ENCODE measurements at regions of chr12 and their contacts with region 1.

Region 1: GRCh38 chr12:108633534-108634248 is at the start of gene SELPLG:
- DNase-seq: peak; percentile 76 to 97 (median 84)
- ATAC-seq: peak; percentile 69
- H3K4me3 ChIP-seq: peak within 1 kb of the TSS; percentile 87
- H3K4me3 Mint-ChIP-seq: peak within 1 kb of the TSS; percentile 98
- H3K27ac ChIP-seq: peak within 1 kb of the TSS; percentile 86 to 95
- H3K27ac Mint-ChIP-seq: peak within 1 kb of the TSS; percentile 100
- H3K4me1 ChIP-seq: peaks cover 69% of the 10 kb centered on the region
- H3K4me1 Mint-ChIP-seq: peaks cover 73% of the 10 kb centered on the region
- H3K27me3 ChIP-seq: no peaks in the 10 kb centered on the region
- H3K27me3 Mint-ChIP-seq: no peaks in the 10 kb centered on the region
- CTCF ChIP-seq: no peak
- total RNA-seq, gene SELPLG: 25.7 to 27.8 TPM

Region 2: DNA sequence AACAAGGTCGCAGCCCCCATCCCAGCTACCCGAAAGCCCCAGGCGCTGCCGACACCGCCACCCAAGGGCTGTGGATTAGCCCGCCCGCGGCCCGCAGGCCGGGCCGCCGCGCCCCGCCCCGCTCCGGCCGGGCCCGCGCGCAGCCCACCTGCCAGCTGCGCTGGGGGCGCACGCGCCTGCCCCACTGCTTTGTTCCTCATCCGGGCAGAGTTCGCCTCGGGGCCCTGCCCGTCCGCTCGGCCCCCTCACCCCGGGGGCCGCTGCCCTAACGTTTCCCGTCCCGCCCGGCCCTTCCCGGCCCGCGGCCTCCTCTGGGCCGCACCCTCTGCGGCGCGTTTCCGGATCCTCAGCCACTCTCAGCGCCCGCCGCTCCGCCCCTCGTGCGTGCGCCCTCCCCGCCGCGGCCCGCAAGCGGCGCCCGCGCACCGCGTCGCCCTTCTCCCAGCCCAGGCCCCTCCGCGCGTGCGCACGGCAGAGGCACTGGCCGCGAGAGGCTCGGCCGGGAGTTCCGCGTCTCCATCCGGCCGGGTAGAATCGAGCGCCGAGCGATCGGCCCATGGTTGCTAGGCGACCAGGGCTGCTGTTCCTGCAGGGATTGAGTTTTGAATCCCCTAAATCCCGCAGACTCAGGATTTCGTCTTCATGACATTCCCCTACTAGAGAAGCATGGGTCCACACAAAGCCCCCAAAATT is 872.7 kb before region 1 on chr12 and contains the start of gene PRDM4:
- CTCF ChIA-PET with region 1: no interaction called
- POLR2A ChIA-PET with region 1: no interaction called
- intact Hi-C with region 1: loop called in 1 of 2 experiments (anchors 10 kb)
- DNase-seq: peak; percentile 75 to 98 (median 88)
- ATAC-seq: peak; percentile 91
- H3K4me3 ChIP-seq: peak within 1 kb of the TSS; percentile 78
- H3K4me3 Mint-ChIP-seq: peak within 1 kb of the TSS; percentile 96
- H3K27ac ChIP-seq: peak within 1 kb of the TSS; percentile 51 to 77
- H3K27ac Mint-ChIP-seq: peak within 1 kb of the TSS; percentile 87
- H3K4me1 ChIP-seq: peaks cover 26% of the 10 kb centered on the region
- H3K4me1 Mint-ChIP-seq: peaks cover 48% of the 10 kb centered on the region
- H3K27me3 ChIP-seq: no peaks in the 10 kb centered on the region
- H3K27me3 Mint-ChIP-seq: no peaks in the 10 kb centered on the region
- CTCF ChIP-seq: no peak
- total RNA-seq, gene PRDM4: 40.2 to 44.0 TPM

Region 3: DNA sequence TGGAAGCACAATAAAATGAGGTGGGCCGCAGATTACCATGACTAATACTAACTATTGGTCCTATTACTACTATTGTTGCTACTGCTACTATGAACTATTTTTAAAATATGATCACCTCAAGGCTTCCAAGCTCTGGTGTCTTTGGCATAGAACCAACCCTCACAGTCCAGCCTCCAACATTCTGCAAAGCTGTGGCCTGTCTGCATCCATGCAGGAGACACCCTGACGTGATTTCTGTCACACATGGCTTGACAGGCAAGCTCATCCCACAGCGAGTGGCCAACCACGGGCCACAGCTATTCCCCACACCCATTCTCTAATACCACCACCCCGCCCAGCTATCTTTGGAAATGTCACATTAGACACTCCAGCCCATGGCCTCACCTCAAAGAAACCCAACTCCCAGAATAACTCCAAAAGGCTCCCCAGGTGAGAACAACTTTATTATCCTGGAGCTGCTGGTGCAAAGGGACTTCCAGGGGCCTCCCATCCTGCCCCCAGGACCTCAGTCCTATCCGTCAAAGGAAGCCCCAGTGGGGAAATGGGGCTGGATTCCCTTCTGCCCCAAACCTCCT is 56.9 kb before region 1 on chr12:
- CTCF ChIA-PET with region 1: no interaction called
- POLR2A ChIA-PET with region 1: interaction called, 11 read pairs
- intact Hi-C with region 1: no loop called
- DNase-seq: no peak
- ATAC-seq: no peak
- H3K4me3 ChIP-seq: no peak overlapping the region
- H3K4me3 Mint-ChIP-seq: no peak overlapping the region
- H3K27ac ChIP-seq: no peak overlapping the region
- H3K27ac Mint-ChIP-seq: peak overlapping the region; percentile 76
- H3K4me1 ChIP-seq: peaks cover 15% of the 10 kb centered on the region
- H3K4me1 Mint-ChIP-seq: peaks cover 45% of the 10 kb centered on the region
- H3K27me3 ChIP-seq: no peaks in the 10 kb centered on the region
- H3K27me3 Mint-ChIP-seq: no peaks in the 10 kb centered on the region
- CTCF ChIP-seq: no peak

Region 4: GRCh38 chr12:108597559-108598471 is 35.9 kb before region 1 on chr12 and contains the start of gene TMEM119:
- CTCF ChIA-PET with region 1: no interaction called
- POLR2A ChIA-PET with region 1: no interaction called
- intact Hi-C with region 1: no loop called
- DNase-seq: no peak
- ATAC-seq: no peak
- H3K4me3 ChIP-seq: no peak within 1 kb of the TSS
- H3K4me3 Mint-ChIP-seq: no peak within 1 kb of the TSS
- H3K27ac ChIP-seq: no peak within 1 kb of the TSS
- H3K27ac Mint-ChIP-seq: no peak within 1 kb of the TSS
- H3K4me1 ChIP-seq: no peaks in the 10 kb centered on the region
- H3K4me1 Mint-ChIP-seq: no peaks in the 10 kb centered on the region
- H3K27me3 ChIP-seq: no peaks in the 10 kb centered on the region
- H3K27me3 Mint-ChIP-seq: no peaks in the 10 kb centered on the region
- CTCF ChIP-seq: no peak
- total RNA-seq, gene TMEM119: 2.1 to 2.6 TPM

Region 5: DNA sequence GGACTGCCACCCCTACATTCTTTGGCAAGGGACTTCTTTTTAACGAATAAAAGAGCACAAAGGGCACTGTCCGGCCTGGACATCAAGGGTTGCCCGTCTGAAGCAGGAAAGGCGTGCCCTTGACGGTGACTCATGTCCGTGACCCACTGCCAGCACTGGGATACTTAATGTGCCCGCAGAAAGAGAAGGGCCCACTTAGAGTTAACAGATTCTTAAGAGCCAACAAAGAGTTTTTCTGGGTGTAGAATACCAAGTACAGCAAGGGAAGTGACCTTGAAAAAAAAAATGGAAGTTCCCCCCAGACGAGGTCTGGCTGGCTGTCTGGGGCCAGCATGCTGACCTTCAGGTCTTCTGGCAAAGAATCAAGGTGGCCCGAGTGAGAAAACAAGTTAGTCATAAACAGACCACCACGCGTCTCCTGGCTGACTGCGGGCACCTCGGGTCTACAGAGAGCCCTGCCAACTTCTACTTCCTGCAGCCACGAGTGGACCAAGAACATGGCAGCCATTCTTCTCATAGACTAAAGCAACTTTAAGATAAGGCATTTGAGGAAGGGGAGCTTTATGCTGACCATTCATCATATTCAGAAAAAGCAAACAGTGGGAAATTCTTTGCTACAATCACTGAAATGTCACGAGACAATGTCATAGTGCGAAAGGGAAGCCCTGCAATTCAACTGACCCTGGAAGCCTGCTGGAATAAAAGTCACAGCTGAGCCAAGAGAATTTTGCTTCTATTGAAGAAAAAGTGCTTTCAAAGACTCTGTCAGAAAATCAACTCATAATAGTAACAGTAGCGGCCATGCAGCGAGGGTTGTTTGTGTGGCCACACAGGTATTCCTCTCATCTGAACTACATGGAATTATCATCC is 10.5 kb after region 1 on chr12:
- CTCF ChIA-PET with region 1: interaction called, 6 read pairs
- POLR2A ChIA-PET with region 1: interaction called, 70 read pairs
- intact Hi-C with region 1: no loop called
- DNase-seq: no peak
- ATAC-seq: no peak
- H3K4me3 ChIP-seq: no peak overlapping the region
- H3K4me3 Mint-ChIP-seq: no peak overlapping the region
- H3K27ac ChIP-seq: no peak overlapping the region
- H3K27ac Mint-ChIP-seq: no peak overlapping the region
- H3K4me1 ChIP-seq: peaks cover 36% of the 10 kb centered on the region
- H3K4me1 Mint-ChIP-seq: peaks cover 31% of the 10 kb centered on the region
- H3K27me3 ChIP-seq: no peaks in the 10 kb centered on the region
- H3K27me3 Mint-ChIP-seq: no peaks in the 10 kb centered on the region
- CTCF ChIP-seq: no peak

Region 6: GRCh38 chr12:108691175-108691997 is 57.7 kb after region 1 on chr12:
- CTCF ChIA-PET with region 1: interaction called, 4 read pairs
- POLR2A ChIA-PET with region 1: interaction called, 4 read pairs
- intact Hi-C with region 1: loop called in 1 of 2 experiments (anchors 5 kb)
- DNase-seq: peak; percentile 17 to 87 (median 58)
- ATAC-seq: peak; percentile 74
- H3K4me3 ChIP-seq: peak overlapping the region; percentile 32
- H3K4me3 Mint-ChIP-seq: peak overlapping the region; percentile 70
- H3K27ac ChIP-seq: peak overlapping the region in 1 of 2 donors; percentile 50
- H3K27ac Mint-ChIP-seq: peak overlapping the region; percentile 77
- H3K4me1 ChIP-seq: peaks cover 41% of the 10 kb centered on the region
- H3K4me1 Mint-ChIP-seq: peaks cover 58% of the 10 kb centered on the region
- H3K27me3 ChIP-seq: no peaks in the 10 kb centered on the region
- H3K27me3 Mint-ChIP-seq: no peaks in the 10 kb centered on the region
- CTCF ChIP-seq: no peak

Region 7: DNA sequence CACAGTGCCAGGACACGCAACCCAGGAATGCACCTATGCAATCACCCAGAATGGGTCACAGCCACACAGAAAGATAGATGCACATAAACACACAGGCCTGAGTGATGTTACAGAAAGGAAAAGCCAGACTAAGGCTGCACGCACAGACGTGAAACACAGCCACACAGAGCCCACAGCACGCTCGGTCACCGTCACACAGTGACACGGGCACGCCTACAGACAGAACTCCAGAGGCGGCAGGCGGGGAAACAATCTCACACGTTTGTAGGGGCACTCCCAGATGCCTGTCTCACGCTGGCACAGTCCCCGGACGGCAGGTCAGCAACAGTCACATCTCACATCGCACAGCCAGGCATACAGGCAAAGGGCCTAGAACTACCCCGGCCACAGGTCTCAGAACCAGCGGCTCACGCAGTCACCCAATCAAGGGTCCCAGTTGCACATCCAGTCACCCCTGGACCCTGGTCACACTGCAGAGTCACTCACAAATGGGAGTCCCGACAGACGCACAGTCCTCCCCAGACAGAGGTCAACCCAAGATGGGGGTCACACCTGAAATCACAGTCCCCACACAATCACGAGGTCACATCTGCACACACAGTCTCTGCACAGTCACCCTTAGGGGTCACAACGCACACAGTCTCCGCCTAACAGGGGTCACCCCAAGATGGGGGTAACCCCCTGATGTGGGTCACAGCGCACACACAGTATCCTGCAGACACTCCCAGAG is 222.9 kb after region 1 on chr12:
- CTCF ChIA-PET with region 1: no interaction called
- POLR2A ChIA-PET with region 1: interaction called, 14 read pairs
- intact Hi-C with region 1: no loop called
- DNase-seq: peak in 13 of 14 experiments; percentile 35 to 92 (median 58)
- ATAC-seq: peak; percentile 75
- H3K4me3 ChIP-seq: peak overlapping the region; percentile 72
- H3K4me3 Mint-ChIP-seq: peak overlapping the region; percentile 95
- H3K27ac ChIP-seq: peak overlapping the region in 1 of 2 donors; percentile 22
- H3K27ac Mint-ChIP-seq: peak overlapping the region; percentile 90
- H3K4me1 ChIP-seq: peaks cover 36% of the 10 kb centered on the region
- H3K4me1 Mint-ChIP-seq: peaks cover 42% of the 10 kb centered on the region
- H3K27me3 ChIP-seq: no peaks in the 10 kb centered on the region
- H3K27me3 Mint-ChIP-seq: no peaks in the 10 kb centered on the region
- CTCF ChIP-seq: no peak

Region 8: DNA sequence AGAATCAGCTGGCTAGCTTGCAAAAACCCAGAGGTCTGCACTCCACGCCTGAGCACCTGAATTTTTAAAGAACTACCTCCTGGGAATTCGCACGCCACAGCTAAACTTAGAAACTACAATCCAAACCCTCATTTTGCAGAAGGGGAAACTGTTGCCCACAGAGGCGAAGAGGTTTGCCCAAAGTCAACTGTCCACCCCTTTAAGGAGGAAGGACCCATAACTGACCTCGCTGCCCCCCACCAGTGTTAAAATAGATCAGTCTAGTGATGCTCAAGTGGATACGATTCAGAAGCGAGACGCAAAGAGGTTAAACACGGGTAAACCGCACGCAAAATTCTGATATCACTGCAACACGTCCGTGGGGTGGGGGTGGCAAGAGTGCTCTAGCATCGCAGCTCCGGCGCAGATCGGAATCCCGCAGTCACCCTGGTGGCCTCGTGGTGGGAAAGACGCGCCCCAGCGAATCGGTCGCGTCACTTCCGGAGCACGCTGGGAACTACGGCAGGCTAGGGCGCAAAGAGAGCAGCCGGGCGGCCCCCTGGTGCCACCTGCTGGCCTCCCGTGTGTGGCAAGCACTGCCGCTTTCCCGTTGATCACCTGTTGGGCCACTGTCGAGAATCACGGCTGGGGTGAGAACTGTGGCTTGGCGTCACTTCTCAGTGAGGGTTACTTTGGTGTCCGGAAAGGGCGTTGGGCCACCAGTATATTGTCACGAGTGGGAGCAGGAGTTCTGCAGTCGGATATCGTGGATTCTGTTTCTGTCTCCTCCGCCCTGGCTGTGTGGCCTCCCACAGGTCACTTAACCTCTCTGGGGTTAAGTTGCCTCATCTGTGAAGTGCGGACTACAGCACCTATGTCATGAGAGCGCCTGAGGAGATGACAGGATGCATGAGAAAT is 459.6 kb after region 1 on chr12 and contains the start of gene ALKBH2:
- CTCF ChIA-PET with region 1: interaction called, 4 read pairs
- POLR2A ChIA-PET with region 1: no interaction called
- intact Hi-C with region 1: loop called in 1 of 2 experiments (anchors 5 kb)
- DNase-seq: peak; percentile 91 to 98 (median 94)
- ATAC-seq: peak; percentile 83
- H3K4me3 ChIP-seq: peak within 1 kb of the TSS; percentile 84
- H3K4me3 Mint-ChIP-seq: peak within 1 kb of the TSS; percentile 91
- H3K27ac ChIP-seq: peak within 1 kb of the TSS; percentile 64 to 66
- H3K27ac Mint-ChIP-seq: peak within 1 kb of the TSS; percentile 87
- H3K4me1 ChIP-seq: peaks cover 41% of the 10 kb centered on the region
- H3K4me1 Mint-ChIP-seq: peaks cover 43% of the 10 kb centered on the region
- H3K27me3 ChIP-seq: no peaks in the 10 kb centered on the region
- H3K27me3 Mint-ChIP-seq: no peaks in the 10 kb centered on the region
- CTCF ChIP-seq: peak; percentile 96
- total RNA-seq, gene ALKBH2: 12.8 to 14.0 TPM